HEK293 (cell line): ENCODE measurements at regions of chr1 and their contacts with region 1.

Region 1: GRCh38 chr1:67535474-67535873 is 105.3 kb upstream of the SERBP1 start:
- H3K4me3 ChIP-seq: no peak overlapping the region
- H3K27ac ChIP-seq: no peak overlapping the region
- H3K4me1 ChIP-seq: no peaks in the 10 kb centered on the region
- CTCF ChIP-seq: peak; percentile 83

Region 2: GRCh38 chr1:67430352-67431155 is 104.9 kb before region 1 on chr1 and contains the start of gene SERBP1:
- CTCF ChIA-PET with region 1: no interaction called
- POLR2A ChIA-PET with region 1: no interaction called
- H3K4me3 ChIP-seq: peak within 1 kb of the TSS; percentile 98
- H3K27ac ChIP-seq: peak within 1 kb of the TSS; percentile 96
- H3K4me1 ChIP-seq: peaks cover 9% of the 10 kb centered on the region
- CTCF ChIP-seq: no peak

Region 3: DNA sequence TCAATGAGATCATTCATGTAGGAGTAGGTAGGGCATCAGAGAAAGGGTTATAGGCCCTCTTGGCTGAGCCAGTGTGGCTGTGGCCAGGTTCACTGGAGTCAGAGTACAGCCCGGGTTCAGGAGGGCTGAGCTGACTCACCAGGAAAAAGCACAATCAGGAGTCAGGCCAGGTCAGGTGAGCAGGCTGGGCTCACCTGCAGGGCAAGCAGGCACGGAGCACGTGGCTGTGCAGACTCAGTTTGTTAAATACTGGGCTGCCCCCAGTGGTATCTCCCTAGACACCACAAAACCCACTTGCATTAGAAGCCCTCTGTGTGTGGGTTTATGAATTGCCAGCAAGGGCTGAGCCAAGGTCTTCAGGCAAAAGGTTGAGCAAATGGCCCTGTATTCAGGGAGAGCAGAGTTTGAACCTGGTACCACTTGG is 16.9 kb after region 1 on chr1:
- CTCF ChIA-PET with region 1: interaction called, 21 read pairs
- POLR2A ChIA-PET with region 1: no interaction called
- H3K4me3 ChIP-seq: no peak overlapping the region
- H3K27ac ChIP-seq: no peak overlapping the region
- H3K4me1 ChIP-seq: no peaks in the 10 kb centered on the region
- CTCF ChIP-seq: peak; percentile 44; the same call in 1 of the 2 replicates

Region 4: GRCh38 chr1:67561704-67562113 is 26.2 kb after region 1 on chr1:
- CTCF ChIA-PET with region 1: interaction called, 37 read pairs
- POLR2A ChIA-PET with region 1: no interaction called
- H3K4me3 ChIP-seq: no peak overlapping the region
- H3K27ac ChIP-seq: no peak overlapping the region
- H3K4me1 ChIP-seq: no peaks in the 10 kb centered on the region
- CTCF ChIP-seq: peak; percentile 54; the same call in 1 of the 2 replicates

Region 5: GRCh38 chr1:67570473-67571143 is 35.1 kb after region 1 on chr1:
- CTCF ChIA-PET with region 1: interaction called, 10 read pairs
- POLR2A ChIA-PET with region 1: no interaction called
- H3K4me3 ChIP-seq: no peak overlapping the region
- H3K27ac ChIP-seq: no peak overlapping the region
- H3K4me1 ChIP-seq: no peaks in the 10 kb centered on the region
- CTCF ChIP-seq: no peak